GM13976 (cell line): ENCODE measurements at regions of chr1 and their contacts with region 1.

Region 1: GRCh38 chr1:205255941-205256780 is 28.4 kb downstream of the TMCC2 start:
- DNase-seq: peak; percentile 88
- CTCF ChIP-seq: peak; percentile 96

Region 2: DNA sequence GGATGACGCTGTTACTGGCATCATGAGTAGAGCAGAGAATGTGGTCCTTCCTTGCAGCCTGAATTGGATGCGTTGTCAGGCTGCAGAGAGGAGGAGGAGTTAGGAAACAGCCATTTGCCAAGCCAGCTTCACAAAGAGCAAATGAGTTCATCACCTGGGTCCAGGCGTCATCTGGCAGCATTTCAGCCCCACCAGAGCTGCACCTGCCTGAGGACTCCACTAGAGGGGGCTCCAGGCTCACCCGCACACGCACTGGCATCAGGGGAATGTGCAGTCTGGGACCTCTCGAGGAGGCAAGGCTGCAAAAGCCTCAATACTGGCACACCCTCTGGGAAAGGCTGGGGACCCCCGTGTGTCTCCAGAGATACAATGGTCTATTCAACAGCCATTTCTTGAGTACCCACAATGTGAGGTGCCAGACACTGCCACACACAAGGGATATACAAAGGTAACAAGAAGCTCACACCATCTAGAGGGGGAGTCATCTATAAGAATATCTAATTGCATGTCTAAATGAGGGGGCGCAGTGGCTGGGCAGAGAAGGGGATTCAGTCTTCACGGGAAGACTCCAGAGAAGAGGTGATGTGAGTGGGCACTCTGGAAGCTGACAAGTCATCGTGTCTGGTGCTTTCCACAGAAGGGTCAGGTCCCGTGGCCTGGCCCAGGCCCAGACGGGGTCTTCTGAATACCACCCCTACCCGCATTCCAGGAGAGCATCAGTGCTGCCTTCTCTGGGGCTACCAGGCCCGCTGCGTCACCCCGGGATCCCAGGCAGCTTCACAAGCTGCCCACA is 266.7 kb before region 1 on chr1:
- in situ Hi-C with region 1: loop called (anchors 10 kb)
- DNase-seq: peak; percentile 91
- CTCF ChIP-seq: peak; percentile 90

Region 3: GRCh38 chr1:205190845-205191577 is 65.2 kb before region 1 on chr1:
- in situ Hi-C with region 1: no loop called
- DNase-seq: no peak
- CTCF ChIP-seq: no peak